Activated CD8-positive, alpha-beta T cell treated with anti-CD3 and anti-CD28 coated beads, Interleukin-2, amount 10 ng/mL, durations not matched to agents 7 days and 5 days (primary cell): ENCODE measurements at regions of chr1 and their contacts with region 1.

Region 1: GRCh38 chr1:212062832-212063438 is 27.4 kb downstream of the DTL start:
- DNase-seq: no peak
- ATAC-seq: peak; percentile 60
- H3K4me3 Mint-ChIP-seq: no peak overlapping the region
- H3K27ac Mint-ChIP-seq: no peak overlapping the region
- H3K4me1 Mint-ChIP-seq: peaks cover 3% of the 10 kb centered on the region
- H3K27me3 Mint-ChIP-seq: no peaks in the 10 kb centered on the region

Region 2: DNA sequence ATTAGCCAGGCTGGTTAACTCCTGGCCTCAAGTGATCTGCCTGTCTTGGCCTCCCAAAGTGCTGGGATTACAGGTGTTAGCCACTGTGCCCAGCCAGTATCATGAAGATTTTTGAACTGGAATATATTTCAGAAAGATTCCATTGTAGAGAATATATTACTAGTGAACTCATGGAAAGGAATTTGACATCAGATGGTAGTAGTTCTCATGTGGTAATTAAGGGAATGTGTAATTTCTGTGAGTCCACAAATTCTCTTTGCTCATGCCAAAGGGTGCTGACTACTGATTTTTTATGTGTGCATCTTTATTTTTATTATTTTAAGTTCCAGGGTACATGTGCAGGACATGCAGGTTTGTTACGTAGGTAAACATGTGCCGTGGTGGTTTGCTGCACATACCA is 17.0 kb before region 1 on chr1:
- CTCF ChIA-PET with region 1: interaction called, 22 read pairs
- POLR2A ChIA-PET with region 1: no interaction called
- DNase-seq: no peak
- ATAC-seq: no peak
- H3K4me3 Mint-ChIP-seq: no peak overlapping the region
- H3K27ac Mint-ChIP-seq: no peak overlapping the region
- H3K4me1 Mint-ChIP-seq: peaks cover 14% of the 10 kb centered on the region
- H3K27me3 Mint-ChIP-seq: no peaks in the 10 kb centered on the region

Region 3: DNA sequence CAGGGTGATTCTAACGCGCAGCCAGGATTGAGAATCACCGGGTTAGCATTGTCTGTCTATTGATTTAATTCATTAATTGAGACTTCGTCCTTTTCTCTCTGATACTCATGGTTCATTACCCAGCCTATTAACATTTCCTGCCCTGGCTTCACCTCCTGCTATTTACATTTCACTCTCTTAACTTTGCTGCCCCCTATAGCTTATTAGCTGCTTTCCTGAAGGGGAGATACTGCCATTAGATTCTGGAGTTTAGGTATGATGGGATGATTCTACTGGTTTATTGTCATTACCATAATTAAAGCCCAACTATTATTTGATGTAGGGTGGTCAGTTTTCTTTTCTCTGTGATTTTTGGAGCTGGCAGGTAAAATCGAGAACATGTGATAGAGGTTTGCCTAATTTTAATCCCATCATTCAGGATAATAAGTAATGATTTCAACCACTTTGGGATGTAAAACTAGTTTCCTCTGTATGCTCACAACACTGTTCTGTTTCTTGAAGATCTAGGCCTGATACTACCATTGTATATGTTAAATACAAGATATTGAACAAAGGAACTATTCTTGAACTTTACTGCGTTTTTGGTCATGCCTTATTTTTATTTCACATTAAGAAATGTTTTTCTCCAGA is 228.7 kb after region 1 on chr1:
- CTCF ChIA-PET with region 1: interaction called, 10 read pairs
- POLR2A ChIA-PET with region 1: no interaction called
- DNase-seq: peak; percentile 37
- ATAC-seq: peak; percentile 77
- H3K4me3 Mint-ChIP-seq: no peak overlapping the region
- H3K27ac Mint-ChIP-seq: no peak overlapping the region
- H3K4me1 Mint-ChIP-seq: peaks cover 69% of the 10 kb centered on the region
- H3K27me3 Mint-ChIP-seq: no peaks in the 10 kb centered on the region

Region 4: GRCh38 chr1:212368073-212368484 is 305.1 kb after region 1 on chr1:
- CTCF ChIA-PET with region 1: interaction called, 10 read pairs
- POLR2A ChIA-PET with region 1: no interaction called
- DNase-seq: peak; percentile 76
- ATAC-seq: peak; percentile 92
- H3K4me3 Mint-ChIP-seq: no peak overlapping the region
- H3K27ac Mint-ChIP-seq: no peak overlapping the region
- H3K4me1 Mint-ChIP-seq: no peaks in the 10 kb centered on the region
- H3K27me3 Mint-ChIP-seq: no peaks in the 10 kb centered on the region